Spleen (tissue), 13 donors: ENCODE measurements at regions of chr7 and their contacts with region 1.

Region 1: GRCh38 chr7:32891800-32892520 is 400 bp upstream of the KBTBD2 start:
- DNase-seq: peak; percentile 99
- H3K4me3 ChIP-seq: peak overlapping the region; percentile 30 to 88 (median 74)
- H3K27ac ChIP-seq: peak overlapping the region; percentile 96 to 99 (median 99)
- H3K4me1 ChIP-seq: peaks cover 37 to 56% (median 47%) of the 10 kb centered on the region in 6 donors
- H3K27me3 ChIP-seq: no peaks in the 10 kb centered on the region
- CTCF ChIP-seq: peak in 2 of 11 experiments; percentile 8 to 11
- POLR2A ChIP-seq: peak in 1 of 3 donors; percentile 52

Region 2: DNA sequence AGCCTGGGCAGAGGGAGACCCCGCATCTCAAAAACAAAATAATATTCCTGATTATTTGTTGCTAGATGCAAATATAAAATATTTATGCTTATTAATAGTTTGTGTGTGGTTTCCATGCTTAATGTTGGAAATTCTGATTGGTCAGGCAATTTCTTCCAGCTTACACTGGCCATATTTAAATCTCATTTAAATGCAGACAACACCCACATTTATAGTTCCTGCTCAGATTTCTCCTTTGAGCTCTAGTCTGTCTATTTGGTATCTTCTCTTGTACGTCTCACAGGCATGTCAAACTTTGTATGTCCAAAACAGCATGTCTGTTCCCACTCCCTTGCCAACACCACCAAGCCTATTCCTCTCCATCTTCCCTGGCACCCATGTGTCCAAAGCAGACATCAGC is 117.8 kb after region 1 on chr7:
- intact Hi-C with region 1: no loop called
- DNase-seq: no peak
- H3K4me3 ChIP-seq: no peak overlapping the region
- H3K27ac ChIP-seq: no peak overlapping the region
- H3K4me1 ChIP-seq: no peaks in the 10 kb centered on the region
- H3K27me3 ChIP-seq: no peaks in the 10 kb centered on the region
- CTCF ChIP-seq: no peak
- POLR2A ChIP-seq: no peak

Region 3: DNA sequence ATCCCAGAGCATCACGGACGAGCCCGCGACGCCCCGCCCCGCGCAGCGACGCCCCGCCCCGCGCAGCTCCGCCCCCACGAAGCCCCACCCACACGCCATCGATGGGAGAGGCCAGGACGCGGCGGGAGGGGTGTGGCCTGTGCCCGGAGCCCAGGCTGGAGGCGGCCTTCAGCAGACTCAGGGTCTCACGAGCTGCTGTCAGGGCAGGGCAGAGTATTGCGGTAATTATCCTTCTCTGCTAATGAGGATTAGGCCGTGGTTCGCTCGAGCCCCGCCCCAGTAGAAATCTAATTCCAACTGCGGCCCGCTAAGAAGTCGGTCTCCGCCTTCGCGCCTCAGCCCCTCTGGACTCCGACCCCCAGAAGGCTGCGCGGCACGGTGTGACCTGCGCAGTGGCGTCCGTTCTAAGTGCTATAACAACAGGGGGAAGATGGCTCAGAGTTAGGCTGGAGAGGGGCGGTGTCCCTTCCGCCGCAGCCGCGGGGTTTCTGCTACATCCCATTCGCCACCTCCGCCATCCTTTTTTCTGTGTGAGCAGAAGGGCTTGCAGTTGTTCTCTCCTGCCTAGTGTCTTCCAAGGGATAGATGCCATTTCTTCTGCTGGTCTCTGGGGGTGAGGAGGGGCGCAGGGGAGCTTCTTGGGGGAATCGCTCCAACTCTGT is 171.0 kb after region 1 on chr7:
- intact Hi-C with region 1: loop called (anchors 10 kb)
- DNase-seq: peak; percentile 98
- H3K4me3 ChIP-seq: peak overlapping the region; percentile 62 to 99 (median 92)
- H3K27ac ChIP-seq: peak overlapping the region; percentile 91 to 98 (median 94)
- H3K4me1 ChIP-seq: peaks cover 12 to 50% (median 43%) of the 10 kb centered on the region in 6 donors
- H3K27me3 ChIP-seq: no peaks in the 10 kb centered on the region
- CTCF ChIP-seq: peak in 2 of 11 experiments; percentile 3 to 47
- POLR2A ChIP-seq: peak in 1 of 3 donors; percentile 82